ENCODE measurements at regions of chr2 and their contacts with region 1.

Region 1: DNA sequence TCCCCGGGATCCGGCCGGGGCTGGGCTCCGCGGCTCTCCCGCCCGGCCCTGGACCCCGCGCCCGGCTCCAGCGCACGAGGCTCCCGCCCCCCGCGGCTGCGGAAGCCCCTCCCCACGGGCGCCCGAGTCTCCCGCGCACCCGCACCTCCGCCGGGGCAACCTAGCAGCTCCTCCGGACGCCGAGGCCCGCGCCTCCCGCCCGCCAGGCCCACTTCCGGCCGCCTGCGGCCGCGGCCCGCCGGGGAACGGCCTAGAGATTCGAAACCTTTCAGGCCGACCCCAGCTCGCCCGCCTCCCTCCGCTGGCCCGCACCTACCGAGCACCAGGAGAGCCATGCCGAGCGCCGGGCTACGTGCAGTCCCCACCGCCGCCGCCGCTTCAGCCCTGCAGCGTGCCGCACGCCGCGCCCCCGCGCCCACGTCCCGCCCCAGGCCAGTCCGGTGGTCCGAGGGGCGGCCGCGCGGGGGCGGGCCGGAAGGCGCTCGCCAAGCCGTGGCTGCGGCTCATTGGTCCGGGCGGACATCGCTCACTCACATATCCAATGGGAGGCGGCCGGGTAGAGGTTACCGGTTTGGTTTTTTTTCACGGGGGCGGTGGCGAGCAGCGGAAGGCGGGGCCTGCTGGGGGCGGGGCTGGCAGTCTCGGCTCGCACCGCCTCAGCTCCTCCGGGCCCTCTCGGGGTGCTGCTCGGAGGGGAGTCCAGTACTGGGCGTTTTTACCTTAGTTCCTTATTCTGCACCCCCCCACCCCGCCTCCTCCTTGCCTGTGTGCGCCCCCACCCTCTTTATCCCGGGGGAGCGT is at the start of gene PDIA6:
- DNase-seq: peak; percentile 90 to 95 (median 92)
- H3K4me3 ChIP-seq: peak within 1 kb of the TSS; percentile 72 to 92
- H3K4me3 Mint-ChIP-seq: peak within 1 kb of the TSS; percentile 84 to 95 (median 94)
- H3K27ac ChIP-seq: peak within 1 kb of the TSS; percentile 76
- H3K27ac Mint-ChIP-seq: peak within 1 kb of the TSS; percentile 76 to 95 (median 94)
- H3K4me1 ChIP-seq: peaks cover 47% of the 10 kb centered on the region
- H3K4me1 Mint-ChIP-seq: peaks cover 30 to 43% (median 34%) of the 10 kb centered on the region in 4 donors
- H3K27me3 ChIP-seq: peaks cover under 1% of the 10 kb centered on the region
- H3K27me3 Mint-ChIP-seq: no peaks in the 10 kb centered on the region
- total RNA-seq, gene PDIA6: 75.9 to 84.7 TPM

Region 2: DNA sequence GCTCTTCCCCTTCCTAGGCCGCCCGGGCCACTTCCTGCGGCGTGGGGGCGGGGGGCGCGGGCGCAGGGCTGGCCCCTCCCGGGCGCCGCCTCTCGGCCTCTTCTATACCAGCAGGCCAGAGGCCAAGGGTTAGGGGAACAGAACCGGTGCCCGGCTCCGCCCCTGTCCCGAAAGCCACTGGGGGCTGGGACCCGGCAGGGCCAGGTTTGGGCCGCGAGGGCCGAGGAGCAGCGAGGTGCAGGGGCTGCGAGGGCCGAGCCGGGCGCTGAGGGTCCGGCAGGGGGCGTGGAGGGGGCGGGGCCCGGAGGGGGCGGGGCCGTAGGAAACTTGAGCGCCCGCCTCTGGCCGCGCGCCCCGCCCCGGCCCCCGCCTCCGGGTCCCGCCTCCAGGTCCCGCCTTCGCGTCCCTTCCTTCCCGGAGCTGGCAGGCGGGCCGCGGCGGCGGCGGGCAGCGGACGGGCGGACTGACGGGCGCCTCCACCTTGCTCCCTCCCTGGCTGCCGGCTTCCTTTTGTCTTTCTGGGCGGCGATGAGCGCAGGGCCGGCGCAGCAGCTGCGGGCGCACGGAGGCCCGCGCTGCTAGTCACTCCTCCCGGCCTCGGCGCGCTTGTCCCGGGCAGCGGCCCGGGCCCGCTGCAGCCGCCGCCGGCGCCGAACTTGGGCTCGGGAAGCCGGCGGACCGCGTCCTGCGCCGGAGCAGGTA is 509.9 kb before region 1 on chr2 and contains the start of gene HPCAL1:
- CTCF ChIA-PET with region 1: no interaction called
- POLR2A ChIA-PET with region 1: no interaction called
- intact Hi-C with region 1: loop called (anchors 10 kb)
- DNase-seq: peak; percentile 79 to 88 (median 85)
- H3K4me3 ChIP-seq: peak within 1 kb of the TSS; percentile 75 to 77
- H3K4me3 Mint-ChIP-seq: peak within 1 kb of the TSS; percentile 97 to 100 (median 98)
- H3K27ac ChIP-seq: peak within 1 kb of the TSS; percentile 65
- H3K27ac Mint-ChIP-seq: peak within 1 kb of the TSS; percentile 87 to 96 (median 94)
- H3K4me1 ChIP-seq: peaks cover 66% of the 10 kb centered on the region
- H3K4me1 Mint-ChIP-seq: peaks cover 56 to 86% (median 72%) of the 10 kb centered on the region in 4 donors
- H3K27me3 ChIP-seq: no peaks in the 10 kb centered on the region
- H3K27me3 Mint-ChIP-seq: no peaks in the 10 kb centered on the region
- total RNA-seq, gene HPCAL1: 77.1 to 80.7 TPM

Region 3: DNA sequence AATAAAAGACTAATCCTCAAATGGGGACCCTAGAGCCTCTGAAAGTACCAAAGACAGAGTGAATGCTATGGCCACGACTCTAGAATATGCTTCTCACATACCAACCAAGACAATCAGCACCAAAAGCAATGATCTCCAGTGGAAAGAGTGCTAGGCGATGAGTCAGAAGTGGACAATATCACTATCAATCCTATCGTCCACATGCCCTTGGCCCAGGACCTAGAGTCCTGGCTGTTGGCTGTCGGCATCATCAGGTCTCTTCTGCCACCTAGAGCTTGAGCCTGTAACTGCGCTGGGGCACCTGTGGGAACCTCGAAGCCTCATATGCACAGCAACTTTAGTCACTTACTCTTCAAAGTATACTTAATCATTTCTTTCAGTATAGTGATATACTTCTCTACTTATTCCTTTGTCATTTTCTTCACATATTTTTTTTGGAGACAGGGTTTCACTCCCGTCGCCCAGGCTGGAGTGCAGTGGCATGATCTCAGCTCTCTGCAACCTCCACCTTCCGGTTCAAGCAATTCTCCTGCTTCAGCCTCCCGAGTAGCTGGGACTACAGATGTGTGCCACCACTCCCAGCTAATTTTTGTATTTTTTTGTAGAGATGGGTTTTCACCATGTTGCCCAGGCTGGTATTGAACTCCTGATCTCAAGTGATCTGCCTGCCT is 152.5 kb before region 1 on chr2:
- CTCF ChIA-PET with region 1: no interaction called
- POLR2A ChIA-PET with region 1: no interaction called
- intact Hi-C with region 1: no loop called
- DNase-seq: peak in 3 of 5 donors; percentile 13 to 19 (median 19)
- H3K4me3 ChIP-seq: no peak overlapping the region
- H3K4me3 Mint-ChIP-seq: no peak overlapping the region
- H3K27ac ChIP-seq: no peak overlapping the region
- H3K27ac Mint-ChIP-seq: no peak overlapping the region
- H3K4me1 ChIP-seq: peaks cover 9% of the 10 kb centered on the region
- H3K4me1 Mint-ChIP-seq: peaks cover 5 to 10% (median 9%) of the 10 kb centered on the region in 4 donors
- H3K27me3 ChIP-seq: no peaks in the 10 kb centered on the region
- H3K27me3 Mint-ChIP-seq: no peaks in the 10 kb centered on the region

Region 4: DNA sequence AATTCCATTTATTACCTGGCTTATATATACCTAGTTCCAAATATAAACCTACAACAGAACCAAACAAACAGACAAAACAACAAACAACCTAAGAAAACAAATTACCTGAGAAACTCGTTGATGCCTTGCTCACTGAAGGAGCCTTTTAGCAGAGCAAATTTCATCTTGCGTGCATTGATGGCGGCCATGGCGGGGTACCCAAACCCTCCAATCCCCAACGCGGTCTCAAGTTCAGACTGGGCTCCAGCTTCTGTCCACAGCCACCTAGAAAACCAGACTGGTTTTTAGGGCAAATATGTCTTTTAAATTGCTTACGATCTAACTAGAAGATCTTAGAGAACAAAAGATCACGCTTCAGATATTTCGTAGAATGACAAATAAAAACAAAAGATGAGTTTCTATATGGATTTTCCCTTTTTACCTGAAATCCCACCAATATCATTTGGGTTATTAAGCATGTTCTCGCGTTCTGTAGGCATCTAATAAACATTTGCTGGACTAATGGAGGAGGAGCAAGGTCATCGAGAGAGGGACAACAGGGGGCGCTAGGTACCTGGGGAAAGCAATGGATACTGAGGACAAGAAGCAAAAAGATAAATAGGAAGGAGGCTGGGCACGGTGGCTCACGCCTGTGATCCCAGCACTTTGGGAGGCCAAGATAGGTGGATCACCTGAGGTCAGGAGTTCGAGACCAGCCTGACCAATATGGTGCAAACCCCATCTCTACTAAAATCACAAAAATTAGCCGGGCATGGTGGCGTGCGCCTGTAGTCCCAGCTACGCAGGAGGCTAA is 25.2 kb before region 1 on chr2:
- CTCF ChIA-PET with region 1: interaction called, 6 read pairs
- POLR2A ChIA-PET with region 1: interaction called, 13 read pairs
- intact Hi-C with region 1: loop called (anchors 2 kb)
- DNase-seq: peak in 3 of 5 donors; percentile 9 to 47 (median 11)
- H3K4me3 ChIP-seq: no peak overlapping the region
- H3K4me3 Mint-ChIP-seq: no peak overlapping the region
- H3K27ac ChIP-seq: no peak overlapping the region
- H3K27ac Mint-ChIP-seq: peak overlapping the region in 2 of 7 donors; percentile 13 to 29
- H3K4me1 ChIP-seq: peaks cover 23% of the 10 kb centered on the region
- H3K4me1 Mint-ChIP-seq: peaks cover 0 to 26% (median 20%) of the 10 kb centered on the region in 4 donors
- H3K27me3 ChIP-seq: no peaks in the 10 kb centered on the region
- H3K27me3 Mint-ChIP-seq: no peaks in the 10 kb centered on the region

Region 5: DNA sequence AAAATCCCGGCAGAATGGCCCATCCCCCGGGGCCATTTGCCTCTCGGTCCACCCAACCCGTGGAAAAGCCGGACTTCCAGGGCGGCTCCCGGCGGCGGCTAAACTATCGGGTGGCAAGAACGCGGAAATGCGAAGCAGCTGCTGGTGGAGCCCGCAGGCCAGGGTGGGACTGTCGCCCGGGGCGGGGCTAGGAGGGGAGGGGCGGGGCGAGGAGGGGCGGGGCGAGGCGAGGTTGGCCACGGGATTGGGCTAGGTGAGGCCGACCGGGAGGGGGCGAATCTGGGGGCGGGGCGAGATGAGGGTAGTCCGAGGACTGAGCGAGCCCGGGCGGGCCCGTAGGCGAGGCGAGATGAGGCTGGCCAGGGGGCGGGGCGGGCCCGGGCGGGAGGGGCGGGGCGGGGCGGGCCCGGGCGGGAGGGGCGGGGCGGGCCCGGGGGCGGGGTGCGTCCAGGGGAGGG is 342.4 kb after region 1 on chr2:
- CTCF ChIA-PET with region 1: no interaction called
- POLR2A ChIA-PET with region 1: interaction called, 14 read pairs
- intact Hi-C with region 1: loop called (anchors 1 kb)
- DNase-seq: peak; percentile 95 to 98 (median 97)
- H3K4me3 ChIP-seq: peak overlapping the region; percentile 38 to 66
- H3K4me3 Mint-ChIP-seq: peak overlapping the region; percentile 81 to 88 (median 85)
- H3K27ac ChIP-seq: peak overlapping the region; percentile 68
- H3K27ac Mint-ChIP-seq: peak overlapping the region; percentile 85 to 93 (median 88)
- H3K4me1 ChIP-seq: peaks cover 23% of the 10 kb centered on the region
- H3K4me1 Mint-ChIP-seq: peaks cover 4 to 28% (median 21%) of the 10 kb centered on the region in 4 donors
- H3K27me3 ChIP-seq: no peaks in the 10 kb centered on the region
- H3K27me3 Mint-ChIP-seq: no peaks in the 10 kb centered on the region

Region 6: DNA sequence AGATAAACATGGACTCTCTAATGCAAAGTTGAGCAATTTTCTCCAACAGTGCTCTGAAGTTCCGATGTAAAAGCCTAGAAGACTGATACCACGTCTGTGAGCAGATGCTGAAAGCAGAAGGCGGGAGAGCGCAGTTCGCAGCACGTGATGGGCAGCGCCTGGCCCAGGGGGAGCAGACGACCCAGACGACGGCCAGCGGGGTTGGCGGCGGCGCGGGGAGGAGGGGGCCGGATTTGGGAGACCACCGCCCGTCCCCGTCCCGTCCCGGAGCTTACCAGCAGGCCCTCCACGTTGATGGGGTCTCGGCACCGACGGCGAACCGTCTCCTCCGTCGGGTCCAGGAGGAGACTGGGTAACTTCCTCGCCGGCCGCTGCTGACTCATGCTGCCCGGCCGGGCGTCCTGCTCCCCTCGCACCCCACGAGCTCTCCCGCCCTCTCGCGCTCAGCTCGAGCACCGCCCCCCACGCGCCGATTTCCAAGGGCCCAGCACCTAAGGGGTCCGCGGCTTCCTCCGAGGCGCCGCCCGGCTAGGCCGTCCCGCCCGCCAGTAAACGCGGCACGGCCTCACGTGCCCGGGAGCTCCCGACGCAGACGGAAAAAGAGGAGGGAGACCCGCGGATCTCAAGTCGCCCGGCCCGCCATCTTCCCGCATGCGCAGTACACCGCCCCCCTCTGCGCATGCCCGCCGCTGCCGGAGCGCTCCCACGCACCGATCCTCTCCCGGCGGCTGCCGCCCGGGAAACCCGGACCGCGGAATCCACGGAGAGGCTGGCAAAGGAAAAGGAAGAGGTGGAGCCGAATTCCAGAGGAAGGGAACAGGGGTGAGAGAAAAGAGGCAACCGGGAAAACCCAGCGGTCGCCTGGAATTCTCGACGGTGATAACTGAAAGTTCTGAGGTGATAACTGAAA is 653.2 kb after region 1 on chr2 and contains the start of gene E2F6:
- CTCF ChIA-PET with region 1: no interaction called
- POLR2A ChIA-PET with region 1: interaction called, 4 read pairs
- intact Hi-C with region 1: loop called (anchors 10 kb)
- DNase-seq: peak; percentile 81 to 88 (median 85)
- H3K4me3 ChIP-seq: peak within 1 kb of the TSS; percentile 61 to 65
- H3K4me3 Mint-ChIP-seq: peak within 1 kb of the TSS; percentile 92 to 98 (median 95)
- H3K27ac ChIP-seq: peak within 1 kb of the TSS; percentile 64
- H3K27ac Mint-ChIP-seq: peak within 1 kb of the TSS; percentile 73 to 97 (median 93)
- H3K4me1 ChIP-seq: peaks cover 28% of the 10 kb centered on the region
- H3K4me1 Mint-ChIP-seq: peaks cover 28 to 50% (median 36%) of the 10 kb centered on the region in 4 donors
- H3K27me3 ChIP-seq: no peaks in the 10 kb centered on the region
- H3K27me3 Mint-ChIP-seq: no peaks in the 10 kb centered on the region
- total RNA-seq, gene E2F6: 8.0 to 8.5 TPM

Measured in CD4-positive, alpha-beta memory T cell (primary cell).